Thyroid gland (tissue), 4 donors: ENCODE measurements at regions of chr12 and their contacts with region 1.

Region 1: GRCh38 chr12:93569656-93570551 is 2.6 kb upstream of the SOCS2 start:
- DNase-seq: peak; percentile 88 to 89
- H3K4me3 ChIP-seq: peak overlapping the region; percentile 58 to 79 (median 72)
- H3K27ac ChIP-seq: peak overlapping the region; percentile 90 to 97 (median 95)
- H3K4me1 ChIP-seq: peaks cover 0 to 3% of the 10 kb centered on the region in 2 donors
- H3K27me3 ChIP-seq: no peaks in the 10 kb centered on the region
- CTCF ChIP-seq: peak; percentile 44 to 88 (median 65)
- POLR2A ChIP-seq: peak in 1 of 2 donors; percentile 52

Region 2: DNA sequence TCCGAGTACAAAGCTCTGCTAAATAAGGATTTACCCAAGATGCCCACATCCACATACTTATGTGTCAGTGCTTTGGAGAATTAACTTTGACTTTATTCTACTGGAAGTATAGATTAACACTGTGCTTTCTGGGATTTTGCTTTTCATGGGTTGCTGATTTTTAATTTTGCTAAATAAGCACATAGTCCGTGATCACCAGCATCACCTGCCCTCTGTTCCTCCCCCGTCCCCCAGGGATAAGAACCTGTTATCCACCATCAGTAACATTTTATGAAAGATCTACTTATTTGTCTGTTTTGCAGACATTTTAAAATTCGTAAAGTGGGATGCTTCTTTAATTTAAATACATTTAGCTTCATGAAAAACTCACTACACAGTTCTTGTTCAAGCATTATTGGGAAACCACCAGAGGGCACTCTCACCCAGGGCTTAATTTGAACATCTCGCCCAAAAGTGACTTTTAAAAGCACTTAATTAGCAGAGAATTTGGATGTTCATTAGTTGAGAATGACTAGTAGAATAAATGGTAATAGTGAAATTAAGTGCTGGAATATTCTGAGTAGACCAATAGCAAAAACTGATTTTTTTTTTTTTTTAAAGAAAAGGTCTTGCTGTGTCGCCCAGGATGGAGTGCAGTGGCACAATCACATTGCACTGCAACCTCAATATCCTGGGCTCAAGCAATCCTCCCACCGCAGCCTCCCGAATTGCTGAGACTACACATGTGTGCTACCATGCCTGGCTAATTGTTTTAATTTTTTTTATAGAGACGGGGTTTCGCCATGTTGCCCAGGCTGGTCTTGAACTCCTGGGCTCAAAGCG is 66.9 kb before region 1 on chr12:
- intact Hi-C with region 1: loop called (anchors 10 kb)
- DNase-seq: peak; percentile 34 to 52
- H3K4me3 ChIP-seq: no peak overlapping the region
- H3K27ac ChIP-seq: no peak overlapping the region
- H3K4me1 ChIP-seq: no peaks in the 10 kb centered on the region
- H3K27me3 ChIP-seq: no peaks in the 10 kb centered on the region
- CTCF ChIP-seq: peak in 5 of 6 experiments; percentile 70 to 82 (median 76)
- POLR2A ChIP-seq: no peak

Region 3: DNA sequence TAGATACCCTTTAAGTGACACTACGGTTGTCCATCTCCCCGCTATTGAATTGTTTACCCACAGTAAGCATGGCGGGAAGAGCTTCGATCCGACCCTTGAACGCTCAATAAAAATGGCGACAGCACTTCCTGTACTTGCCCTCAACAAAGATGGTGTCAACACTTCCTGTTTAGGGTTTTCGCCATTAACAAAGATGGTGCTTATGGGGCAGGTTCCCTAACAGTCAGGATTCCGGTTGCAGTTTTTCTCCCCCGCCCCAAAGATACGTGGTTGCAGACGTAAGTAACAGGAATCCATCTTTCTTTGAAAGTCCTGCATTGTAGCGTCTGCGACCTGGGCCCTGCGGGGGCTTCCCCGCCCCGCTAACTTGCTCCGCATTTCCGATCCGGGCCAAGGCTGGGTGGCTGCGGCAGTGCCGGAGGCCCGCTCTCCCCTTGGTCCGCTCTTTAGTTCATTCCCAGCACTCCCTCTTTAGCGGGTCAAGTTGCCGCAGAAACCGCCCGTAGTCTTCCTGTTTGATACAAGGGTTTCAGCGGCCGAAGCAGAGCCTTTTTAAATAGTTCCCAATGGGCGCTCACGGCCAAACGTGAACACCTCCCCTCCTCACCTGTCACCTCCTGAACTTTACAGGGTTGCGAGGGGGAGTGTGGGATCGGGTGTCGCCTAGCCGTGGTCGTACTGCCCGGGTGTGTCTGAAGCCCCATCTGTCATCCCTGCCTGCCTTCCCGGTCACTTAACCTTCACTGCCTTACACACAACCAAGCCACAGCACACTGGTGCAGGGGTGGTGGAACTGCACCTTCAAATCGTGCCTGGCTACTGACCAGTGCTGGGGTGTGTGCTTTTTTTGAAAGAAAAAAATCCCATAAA is 107.5 kb after region 1 on chr12 and contains the start of gene CRADD:
- intact Hi-C with region 1: loop called (anchors 10 kb)
- DNase-seq: peak; percentile 78 to 81
- H3K4me3 ChIP-seq: peak within 1 kb of the TSS; percentile 35 to 76 (median 73)
- H3K27ac ChIP-seq: peak within 1 kb of the TSS; percentile 91 to 98 (median 96)
- H3K4me1 ChIP-seq: peaks cover 11 to 20% of the 10 kb centered on the region in 2 donors
- H3K27me3 ChIP-seq: no peaks in the 10 kb centered on the region
- CTCF ChIP-seq: peak in 1 of 6 experiments; percentile 14
- POLR2A ChIP-seq: peak; percentile 40 to 88
- total RNA-seq, gene CRADD: 43.7 to 76.1 (median 51.0) TPM

Region 4: GRCh38 chr12:93742110-93742934 is 172.4 kb after region 1 on chr12:
- intact Hi-C with region 1: loop called (anchors 5 kb)
- DNase-seq: peak; percentile 82
- H3K4me3 ChIP-seq: peak overlapping the region in 2 of 3 donors; percentile 39 to 41
- H3K27ac ChIP-seq: peak overlapping the region; percentile 90 to 98 (median 93)
- H3K4me1 ChIP-seq: peaks cover 18 to 27% of the 10 kb centered on the region in 2 donors
- H3K27me3 ChIP-seq: no peaks in the 10 kb centered on the region
- CTCF ChIP-seq: peak in 4 of 6 experiments; percentile 29 to 51 (median 38)
- POLR2A ChIP-seq: peak; percentile 23 to 75

Region 5: GRCh38 chr12:93979189-93979588 is 409.3 kb after region 1 on chr12:
- intact Hi-C with region 1: loop called (anchors 5 kb)
- DNase-seq: peak; percentile 24 to 27
- H3K4me3 ChIP-seq: no peak overlapping the region
- H3K27ac ChIP-seq: no peak overlapping the region
- H3K4me1 ChIP-seq: no peaks in the 10 kb centered on the region
- H3K27me3 ChIP-seq: no peaks in the 10 kb centered on the region
- CTCF ChIP-seq: peak in 4 of 6 experiments; percentile 28 to 65 (median 52)
- POLR2A ChIP-seq: no peak

Region 6: DNA sequence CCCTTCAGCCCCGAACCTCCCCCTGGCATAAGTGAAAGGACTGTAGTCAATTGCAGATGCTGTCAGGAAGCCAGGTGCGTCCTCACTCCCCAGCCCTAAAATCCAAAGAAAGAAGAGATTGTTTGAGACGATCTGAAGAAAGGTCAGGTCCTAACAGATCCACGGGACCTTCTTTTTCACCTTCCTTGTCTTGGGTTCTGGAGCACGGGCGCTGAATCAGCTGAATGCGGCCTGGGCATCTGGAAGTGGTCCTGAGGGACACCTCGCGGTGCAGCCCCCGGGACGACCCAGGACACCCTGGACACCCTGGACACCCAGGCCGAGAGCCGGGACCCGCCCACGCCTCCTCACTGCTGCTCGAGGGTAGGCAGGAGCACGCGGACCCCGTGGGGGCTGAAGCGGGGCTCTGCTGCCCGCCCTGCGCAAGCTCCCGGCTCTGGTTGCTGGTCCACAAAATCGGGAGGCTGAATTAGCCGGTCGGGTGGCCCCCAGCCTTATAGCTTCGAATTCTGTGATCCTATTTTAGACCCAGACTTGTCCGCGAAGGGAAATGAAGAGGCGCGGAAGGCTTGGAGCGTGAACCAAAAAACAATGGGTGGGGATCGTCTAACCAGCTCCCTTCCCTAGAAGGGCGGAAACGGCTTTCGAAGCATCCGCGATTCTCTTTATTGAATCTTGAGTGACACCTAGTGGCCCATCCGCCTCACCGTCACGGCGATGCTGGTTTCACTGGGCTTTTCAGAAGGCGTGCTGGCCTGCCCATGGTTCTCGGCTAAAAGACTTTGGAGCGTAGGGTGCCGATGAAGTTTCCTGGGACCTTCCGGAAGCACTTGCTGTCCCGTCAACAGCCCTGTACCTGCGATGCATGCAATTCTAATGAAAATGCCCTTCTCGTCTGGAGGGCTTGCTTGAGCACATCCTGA is 532.1 kb after region 1 on chr12:
- intact Hi-C with region 1: loop called (anchors 5 kb)
- DNase-seq: peak; percentile 82 to 86
- H3K4me3 ChIP-seq: peak overlapping the region in 2 of 3 donors; percentile 39 to 41
- H3K27ac ChIP-seq: peak overlapping the region in 1 of 3 donors; percentile 68
- H3K4me1 ChIP-seq: peaks cover 0 to 7% of the 10 kb centered on the region in 2 donors
- H3K27me3 ChIP-seq: no peaks in the 10 kb centered on the region
- CTCF ChIP-seq: peak; percentile 61 to 87 (median 76)
- POLR2A ChIP-seq: no peak